ENCODE measurements at regions of chr1 and their contacts with region 1.

Region 1: GRCh38 chr1:66503841-66504470 is 30.0 kb upstream of the SGIP1 start:
- DNase-seq: no peak
- ATAC-seq: peak; percentile 64

Region 2: DNA sequence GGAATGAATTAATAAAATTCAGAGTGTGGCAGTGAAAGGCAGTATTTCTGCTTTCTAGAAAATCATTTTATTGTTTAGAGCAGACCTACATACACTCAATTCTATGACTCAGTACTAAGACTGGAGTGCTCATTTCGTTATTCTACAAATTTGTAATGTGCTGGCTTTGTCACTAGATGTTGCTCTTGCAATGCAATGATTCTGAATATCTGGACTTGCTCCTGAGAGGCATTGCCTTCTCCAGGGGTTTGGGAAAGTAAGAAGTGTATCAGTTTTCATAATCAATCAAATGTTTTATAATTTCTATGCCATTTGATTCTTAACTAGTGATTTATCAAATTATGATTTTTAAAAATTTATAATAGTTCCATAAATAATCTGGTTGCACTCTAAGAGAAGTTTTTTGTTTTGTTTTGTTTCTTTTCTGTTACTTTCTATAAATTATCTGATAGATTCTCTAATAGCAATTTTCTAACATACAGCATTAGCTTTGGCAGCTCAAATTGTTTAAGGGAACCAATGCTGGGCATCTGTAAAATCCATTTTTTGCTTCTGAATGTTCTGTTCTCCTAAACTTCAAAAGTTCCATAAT is 250.5 kb before region 1 on chr1:
- intact Hi-C with region 1: loop called (anchors 5 kb)
- DNase-seq: no peak
- ATAC-seq: peak; percentile 85

Region 3: DNA sequence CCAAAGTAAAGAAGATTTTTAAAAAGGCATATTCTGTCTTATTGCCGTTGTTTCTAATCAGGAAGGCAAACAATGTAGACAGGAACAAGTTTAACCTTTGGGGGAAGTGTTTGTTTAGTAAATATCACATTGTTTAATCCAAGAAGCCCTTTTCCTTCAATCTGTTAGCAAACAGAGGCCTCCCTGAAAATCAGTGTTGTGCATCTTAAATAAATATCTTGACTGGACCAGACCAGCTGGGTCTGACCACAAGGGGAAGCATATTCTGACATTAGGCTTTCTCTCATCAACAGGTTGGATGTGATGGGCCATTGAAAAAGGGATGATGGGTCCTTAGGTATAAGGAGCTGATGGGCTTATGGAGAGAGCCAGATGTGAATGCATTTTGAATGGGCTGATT is 51.8 kb before region 1 on chr1:
- intact Hi-C with region 1: loop called (anchors 5 kb)
- DNase-seq: no peak
- ATAC-seq: no peak

Region 4: GRCh38 chr1:66598670-66599069 is 94.7 kb after region 1 on chr1:
- intact Hi-C with region 1: no loop called
- DNase-seq: no peak
- ATAC-seq: no peak

Measured in Right ventricle myocardium inferior (tissue), 1 donor.